ENCODE measurements at regions of chr9 and their contacts with region 1.

Region 1: DNA sequence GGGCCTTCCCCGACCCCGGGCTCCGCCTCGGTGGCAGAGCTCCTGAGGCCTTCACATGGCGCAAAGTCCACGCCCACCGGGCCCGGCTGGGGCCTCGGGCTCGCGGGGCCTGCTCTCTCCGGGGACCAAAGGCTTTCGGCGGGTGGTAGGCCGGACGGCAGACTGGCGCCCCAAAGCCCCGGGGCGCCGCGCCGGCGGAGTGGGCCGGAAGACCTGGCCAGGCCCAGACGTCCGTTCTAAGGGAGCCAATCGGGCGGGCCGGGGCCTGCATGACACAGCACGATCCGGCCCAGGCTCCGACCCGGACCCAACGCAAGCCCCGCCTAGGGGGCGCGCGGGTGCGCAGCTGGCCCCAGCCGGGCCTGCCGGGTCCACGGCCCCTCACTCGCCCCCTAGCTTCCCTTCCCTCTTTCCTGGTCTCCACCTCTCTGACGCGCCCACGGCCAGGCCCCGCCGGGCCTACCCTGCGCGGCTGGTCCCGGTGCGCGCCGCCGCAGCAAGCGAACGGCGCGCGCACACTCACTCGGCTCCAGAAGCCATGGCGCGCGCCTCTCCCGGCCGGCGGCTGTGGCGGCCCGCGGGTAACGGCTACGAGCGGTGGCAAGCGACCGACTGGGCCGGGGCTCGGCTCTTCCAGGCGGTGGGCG is 488 bp downstream of the VCP start:
- DNase-seq: peak; percentile 82 to 85 (median 82)
- H3K4me3 ChIP-seq: peak overlapping the region; percentile 56 to 90 (median 66)
- H3K4me3 Mint-ChIP-seq: peak overlapping the region; percentile 89 to 91
- H3K27ac ChIP-seq: peak overlapping the region; percentile 96 to 97
- H3K27ac Mint-ChIP-seq: peak overlapping the region; percentile 95 to 99 (median 98)
- H3K4me1 ChIP-seq: peaks cover 22 to 29% of the 10 kb centered on the region in 2 donors
- H3K4me1 Mint-ChIP-seq: peaks cover 30% of the 10 kb centered on the region
- H3K27me3 ChIP-seq: no peaks in the 10 kb centered on the region
- H3K27me3 Mint-ChIP-seq: peaks cover 0 to 2% (median 0%) of the 10 kb centered on the region in 3 donors
- CTCF ChIP-seq: peak; percentile 52

Region 2: GRCh38 chr9:34989003-34989945 is 82.7 kb before region 1 on chr9 and contains the start of gene DNAJB5:
- intact Hi-C with region 1: loop called (anchors 5 to 10 kb)
- DNase-seq: peak; percentile 99
- H3K4me3 ChIP-seq: peak within 1 kb of the TSS; percentile 71 to 86 (median 80)
- H3K4me3 Mint-ChIP-seq: peak within 1 kb of the TSS; percentile 92 to 96
- H3K27ac ChIP-seq: peak within 1 kb of the TSS; percentile 11 to 83
- H3K27ac Mint-ChIP-seq: peak within 1 kb of the TSS; percentile 79 to 97 (median 95)
- H3K4me1 ChIP-seq: peaks cover 45 to 60% of the 10 kb centered on the region in 2 donors
- H3K4me1 Mint-ChIP-seq: peaks cover 67% of the 10 kb centered on the region
- H3K27me3 ChIP-seq: peaks cover 0 to 10% of the 10 kb centered on the region in 2 donors
- H3K27me3 Mint-ChIP-seq: peaks cover 8 to 28% (median 24%) of the 10 kb centered on the region in 3 donors
- CTCF ChIP-seq: no peak
- polyA plus RNA-seq, gene DNAJB5: 0.66 to 1.9 (median 0.84) TPM

Region 3: GRCh38 chr9:34994260-34994899 is 77.6 kb before region 1 on chr9:
- intact Hi-C with region 1: loop called (anchors 5 to 10 kb)
- DNase-seq: peak in 1 of 3 donors; percentile 32
- H3K4me3 ChIP-seq: no peak overlapping the region
- H3K4me3 Mint-ChIP-seq: no peak overlapping the region
- H3K27ac ChIP-seq: no peak overlapping the region
- H3K27ac Mint-ChIP-seq: peak overlapping the region in 5 of 7 donors; percentile 1 to 81 (median 20)
- H3K4me1 ChIP-seq: peaks cover 4 to 17% of the 10 kb centered on the region in 2 donors
- H3K4me1 Mint-ChIP-seq: peaks cover 25% of the 10 kb centered on the region
- H3K27me3 ChIP-seq: peaks cover 0 to 10% of the 10 kb centered on the region in 2 donors
- H3K27me3 Mint-ChIP-seq: peaks cover 6 to 14% (median 10%) of the 10 kb centered on the region in 3 donors
- CTCF ChIP-seq: peak; percentile 73

Region 4: DNA sequence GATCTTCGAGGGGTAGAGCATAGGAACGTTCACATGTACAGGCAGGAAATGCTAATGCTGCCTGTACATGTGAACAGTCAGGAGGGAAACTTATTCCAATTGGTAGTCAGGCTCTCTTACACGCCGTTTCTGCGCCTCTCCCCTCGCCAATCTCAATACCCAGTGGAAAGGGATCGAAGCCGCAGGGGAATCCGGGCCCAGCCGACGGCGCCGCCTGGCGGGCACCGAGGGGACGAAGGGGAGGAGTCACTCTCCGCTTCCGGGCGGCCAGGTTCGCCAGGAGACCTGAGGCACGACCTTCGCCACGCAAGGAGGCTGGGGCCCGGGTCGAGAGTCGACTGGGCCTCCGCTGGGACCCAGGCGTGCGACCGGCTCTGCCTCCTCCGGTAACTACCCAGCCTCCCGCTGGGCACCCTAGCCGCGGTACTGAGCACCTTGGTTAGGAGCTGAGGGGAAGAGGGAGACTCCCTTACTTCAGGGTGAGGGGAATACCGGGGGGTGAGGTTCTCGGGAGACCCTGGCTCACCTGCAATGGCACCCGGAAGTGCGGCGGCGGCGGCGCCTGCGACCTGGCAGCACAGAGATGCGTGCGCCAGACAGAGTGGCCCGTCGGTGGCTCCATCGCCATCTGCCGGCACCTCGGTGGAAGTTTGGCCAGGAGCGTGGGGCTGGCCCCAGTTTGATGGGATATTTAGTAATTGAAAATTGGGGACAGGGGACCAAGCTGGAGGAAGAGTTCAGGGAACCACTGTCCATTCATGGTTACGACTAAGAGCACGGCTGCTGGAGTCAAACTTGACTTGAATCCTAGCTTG is 24.3 kb after region 1 on chr9 and contains the start of gene PIGO:
- intact Hi-C with region 1: loop called in 1 of 2 experiments (anchors 2 kb)
- DNase-seq: peak; percentile 81 to 85 (median 81)
- H3K4me3 ChIP-seq: peak within 1 kb of the TSS; percentile 84 to 100 (median 96)
- H3K4me3 Mint-ChIP-seq: peak within 1 kb of the TSS; percentile 82 to 85
- H3K27ac ChIP-seq: peak within 1 kb of the TSS; percentile 87 to 99
- H3K27ac Mint-ChIP-seq: peak within 1 kb of the TSS; percentile 83 to 93 (median 89)
- H3K4me1 ChIP-seq: peaks cover 12 to 17% of the 10 kb centered on the region in 2 donors
- H3K4me1 Mint-ChIP-seq: peaks cover 24% of the 10 kb centered on the region
- H3K27me3 ChIP-seq: no peaks in the 10 kb centered on the region
- H3K27me3 Mint-ChIP-seq: no peaks in the 10 kb centered on the region
- CTCF ChIP-seq: peak; percentile 95
- polyA plus RNA-seq, gene PIGO: 15.7 to 19.1 (median 17.3) TPM

Region 5: DNA sequence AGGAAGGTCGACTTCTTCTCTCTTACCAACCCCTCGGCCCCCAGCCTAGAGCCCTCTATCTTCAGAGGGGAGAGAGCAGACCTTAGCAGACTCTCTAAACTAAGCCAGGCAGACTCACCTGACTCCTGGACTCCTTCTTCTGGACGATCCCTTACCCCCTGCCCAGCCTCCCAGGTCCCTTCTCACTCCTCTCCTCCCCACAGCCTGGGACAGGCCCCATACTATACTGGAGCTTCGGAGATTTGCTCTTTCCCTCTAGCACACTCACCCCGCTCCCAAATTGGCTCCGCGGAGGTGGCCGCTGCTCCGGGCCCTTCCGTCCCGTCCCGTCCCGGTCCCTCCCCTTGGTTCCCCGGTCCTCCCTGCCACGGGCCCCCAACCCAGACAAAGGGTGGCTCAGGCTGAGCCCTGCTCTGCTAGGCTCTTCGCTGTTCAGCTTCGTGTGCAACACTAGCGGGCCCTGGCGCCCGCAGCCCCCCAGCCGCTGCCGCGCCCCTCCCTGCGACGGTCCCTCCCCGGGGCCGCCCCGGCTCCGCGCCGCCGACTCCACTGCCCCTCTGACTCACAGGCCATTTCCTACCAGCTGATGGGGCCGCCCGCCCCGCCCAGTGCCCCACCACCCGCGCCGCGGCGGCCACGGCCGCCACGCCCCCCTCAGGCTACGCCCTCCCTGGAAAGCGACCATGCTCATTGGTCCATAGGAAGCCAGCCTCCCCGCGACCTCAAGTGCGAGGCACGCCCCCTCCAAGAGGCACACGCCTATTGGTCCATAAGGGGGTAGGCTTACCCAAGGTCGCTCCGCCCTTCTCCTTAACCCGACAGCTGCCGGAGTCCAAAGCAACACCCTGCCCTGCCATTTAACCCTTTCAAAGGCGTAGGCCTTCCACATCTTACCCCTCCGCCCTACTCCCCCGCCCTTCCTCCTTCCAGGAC is 39.3 kb after region 1 on chr9:
- intact Hi-C with region 1: loop called in 1 of 2 experiments (anchors 5 kb)
- DNase-seq: peak; percentile 98 to 99 (median 99)
- H3K4me3 ChIP-seq: peak overlapping the region; percentile 68 to 77 (median 69)
- H3K4me3 Mint-ChIP-seq: peak overlapping the region; percentile 86 to 96
- H3K27ac ChIP-seq: peak overlapping the region; percentile 94 to 95
- H3K27ac Mint-ChIP-seq: peak overlapping the region; percentile 99 to 100 (median 100)
- H3K4me1 ChIP-seq: peaks cover 50 to 58% of the 10 kb centered on the region in 2 donors
- H3K4me1 Mint-ChIP-seq: peaks cover 52% of the 10 kb centered on the region
- H3K27me3 ChIP-seq: no peaks in the 10 kb centered on the region
- H3K27me3 Mint-ChIP-seq: peaks cover 0 to 8% (median 0%) of the 10 kb centered on the region in 3 donors
- CTCF ChIP-seq: no peak

Region 6: GRCh38 chr9:35142037-35142436 is 70.1 kb after region 1 on chr9:
- intact Hi-C with region 1: no loop called
- DNase-seq: no peak
- H3K4me3 ChIP-seq: no peak overlapping the region
- H3K4me3 Mint-ChIP-seq: no peak overlapping the region
- H3K27ac ChIP-seq: no peak overlapping the region
- H3K27ac Mint-ChIP-seq: no peak overlapping the region
- H3K4me1 ChIP-seq: no peaks in the 10 kb centered on the region
- H3K4me1 Mint-ChIP-seq: no peaks in the 10 kb centered on the region
- H3K27me3 ChIP-seq: no peaks in the 10 kb centered on the region
- H3K27me3 Mint-ChIP-seq: peaks cover 2 to 4% (median 3%) of the 10 kb centered on the region in 3 donors
- CTCF ChIP-seq: no peak